Calu3 (cell line): ENCODE measurements at regions of chr22 and their contacts with region 1.

Region 1: GRCh38 chr22:17706018-17706900 is 67.7 kb downstream of the BCL2L13 start:
- DNase-seq: peak; percentile 69
- H3K4me3 Mint-ChIP-seq: peak overlapping the region; percentile 54
- H3K27ac Mint-ChIP-seq: peak overlapping the region; percentile 96
- H3K4me1 Mint-ChIP-seq: peaks cover 13% of the 10 kb centered on the region
- H3K27me3 Mint-ChIP-seq: no peaks in the 10 kb centered on the region
- CTCF ChIP-seq: no peak

Region 2: GRCh38 chr22:17552737-17553136 is 153.5 kb before region 1 on chr22:
- CTCF ChIA-PET with region 1: no interaction called
- intact Hi-C with region 1: loop called (anchors 10 kb)
- DNase-seq: no peak
- H3K4me3 Mint-ChIP-seq: no peak overlapping the region
- H3K27ac Mint-ChIP-seq: no peak overlapping the region
- H3K4me1 Mint-ChIP-seq: peaks cover 1% of the 10 kb centered on the region
- H3K27me3 Mint-ChIP-seq: peaks cover 65% of the 10 kb centered on the region
- CTCF ChIP-seq: no peak

Region 3: DNA sequence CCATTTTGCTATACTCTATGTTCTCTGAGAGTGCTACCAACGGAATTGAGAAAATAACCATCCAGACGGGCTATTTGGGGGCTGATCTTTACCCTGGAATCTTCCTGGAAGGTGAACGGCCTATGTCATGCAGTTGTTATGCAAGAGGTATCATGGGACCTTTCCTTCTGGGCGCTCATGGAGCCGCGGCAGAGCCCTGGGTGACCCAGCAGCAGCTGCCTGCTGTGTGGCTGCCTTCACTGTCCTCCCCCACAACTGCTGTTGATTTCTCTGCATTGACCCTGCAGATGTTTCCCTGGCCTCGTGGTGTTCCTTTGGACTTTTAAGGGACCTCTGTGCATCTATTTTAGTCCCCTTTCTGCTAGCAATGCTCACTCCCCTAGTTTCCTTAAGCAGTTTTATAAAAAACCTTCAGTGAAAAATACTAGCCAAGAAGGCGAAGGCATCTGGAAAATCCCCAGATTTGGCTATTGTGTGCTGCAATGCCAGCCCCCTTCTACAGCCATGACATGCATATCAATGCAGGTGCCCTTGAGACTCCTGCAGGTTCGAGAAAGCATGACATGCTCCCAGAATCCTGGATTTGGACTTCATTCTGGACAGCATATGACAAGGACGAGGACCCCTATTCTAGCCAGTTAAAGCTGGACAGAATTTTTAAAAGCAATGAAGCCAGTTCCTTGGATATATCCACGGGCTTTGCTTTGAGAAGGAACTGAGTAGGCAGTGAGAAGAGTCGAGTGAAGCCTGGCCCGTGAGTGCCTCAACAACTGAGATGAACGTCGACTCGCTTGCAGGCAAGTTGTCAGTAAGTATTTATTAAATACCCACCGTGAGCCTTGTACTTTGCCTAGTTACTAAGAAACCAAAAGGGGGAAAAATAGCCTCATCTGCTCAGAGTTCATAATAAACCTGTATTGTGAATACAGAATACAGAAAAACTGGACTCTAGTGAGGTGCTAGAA is 143.1 kb before region 1 on chr22 and contains the start of gene SLC25A18:
- CTCF ChIA-PET with region 1: interaction called, 12 read pairs
- intact Hi-C with region 1: loop called (anchors 10 kb)
- DNase-seq: no peak
- H3K4me3 Mint-ChIP-seq: no peak within 1 kb of the TSS
- H3K27ac Mint-ChIP-seq: no peak within 1 kb of the TSS
- H3K4me1 Mint-ChIP-seq: peaks cover 14% of the 10 kb centered on the region
- H3K27me3 Mint-ChIP-seq: peaks cover 42% of the 10 kb centered on the region
- CTCF ChIP-seq: peak; percentile 36
- total RNA-seq, gene SLC25A18: 0.28 and 0.95 TPM in 2 replicates

Region 4: DNA sequence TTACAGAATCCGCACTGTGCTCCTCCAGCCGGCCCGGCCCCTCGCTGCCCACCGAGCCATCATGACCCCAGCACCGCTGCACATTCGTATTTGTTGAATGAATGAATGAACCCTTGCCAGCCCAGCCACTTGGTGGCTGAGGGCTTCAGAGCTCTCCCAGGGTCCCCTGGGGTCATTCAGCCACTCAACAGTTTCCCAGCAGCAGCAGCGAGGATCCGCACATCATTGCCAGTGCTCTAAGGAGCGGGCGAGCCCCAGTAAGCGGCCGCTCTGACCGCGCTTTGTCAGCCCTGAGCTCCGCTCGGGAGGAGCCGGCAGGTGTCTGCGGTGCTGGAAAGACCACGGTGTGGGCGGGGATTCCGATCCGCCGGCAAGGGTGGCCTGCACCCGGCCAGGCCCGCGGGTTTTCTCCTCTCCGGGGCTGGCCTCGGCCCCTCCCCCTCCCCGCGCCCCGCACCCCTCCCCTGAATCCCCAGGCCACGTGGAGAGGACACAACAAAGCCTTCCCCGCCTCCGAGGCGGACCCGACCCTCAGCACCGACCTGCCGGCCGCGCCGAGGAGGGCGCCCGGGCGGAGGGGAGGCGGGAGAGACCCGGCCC is 67.4 kb after region 1 on chr22:
- CTCF ChIA-PET with region 1: no interaction called
- intact Hi-C with region 1: no loop called
- DNase-seq: peak; percentile 51
- H3K4me3 Mint-ChIP-seq: peak overlapping the region; percentile 91
- H3K27ac Mint-ChIP-seq: peak overlapping the region; percentile 68
- H3K4me1 Mint-ChIP-seq: peaks cover 31% of the 10 kb centered on the region
- H3K27me3 Mint-ChIP-seq: no peaks in the 10 kb centered on the region
- CTCF ChIP-seq: no peak